Naive thymus-derived CD4-positive, alpha-beta T cell (primary cell): ENCODE measurements at regions of chr4 and their contacts with region 1.

Region 1: GRCh38 chr4:145097821-145098674 is at the starts of genes ABCE1 and ANAPC10:
- DNase-seq: peak; percentile 88 to 98 (median 94)
- ATAC-seq: peak; percentile 96
- H3K4me3 ChIP-seq: peak within 1 kb of the TSS; percentile 94
- H3K4me3 Mint-ChIP-seq: peak within 1 kb of the TSS in 9 of 10 donors; percentile 93 to 98 (median 96)
- H3K27ac ChIP-seq: peak within 1 kb of the TSS; percentile 80
- H3K27ac Mint-ChIP-seq: peak within 1 kb of the TSS; percentile 95 to 99 (median 98)
- H3K4me1 ChIP-seq: peaks cover 22 to 23% of the 10 kb centered on the region in 2 donors
- H3K4me1 Mint-ChIP-seq: peaks cover 28 to 52% (median 33%) of the 10 kb centered on the region in 7 donors
- H3K27me3 ChIP-seq: no peaks in the 10 kb centered on the region
- H3K27me3 Mint-ChIP-seq: no peaks in the 10 kb centered on the region
- total RNA-seq, gene ABCE1: 43.4 to 81.3 (median 62.2) TPM
- total RNA-seq, gene ANAPC10: 13.2 to 28.0 (median 19.6) TPM

Region 2: GRCh38 chr4:143558823-143559756 is 1539.0 kb before region 1 on chr4:
- CTCF ChIA-PET with region 1: no interaction called
- POLR2A ChIA-PET with region 1: no interaction called
- intact Hi-C with region 1: loop called in 1 of 2 experiments (anchors 10 kb)
- DNase-seq: peak; percentile 38 to 80 (median 58)
- ATAC-seq: peak; percentile 86
- H3K4me3 ChIP-seq: peak overlapping the region; percentile 79
- H3K4me3 Mint-ChIP-seq: peak overlapping the region; percentile 87 to 97 (median 90)
- H3K27ac ChIP-seq: peak overlapping the region; percentile 52
- H3K27ac Mint-ChIP-seq: peak overlapping the region; percentile 78 to 96 (median 91)
- H3K4me1 ChIP-seq: peaks cover 7 to 11% of the 10 kb centered on the region in 2 donors
- H3K4me1 Mint-ChIP-seq: peaks cover 8 to 40% (median 28%) of the 10 kb centered on the region in 7 donors
- H3K27me3 ChIP-seq: no peaks in the 10 kb centered on the region
- H3K27me3 Mint-ChIP-seq: no peaks in the 10 kb centered on the region

Region 3: DNA sequence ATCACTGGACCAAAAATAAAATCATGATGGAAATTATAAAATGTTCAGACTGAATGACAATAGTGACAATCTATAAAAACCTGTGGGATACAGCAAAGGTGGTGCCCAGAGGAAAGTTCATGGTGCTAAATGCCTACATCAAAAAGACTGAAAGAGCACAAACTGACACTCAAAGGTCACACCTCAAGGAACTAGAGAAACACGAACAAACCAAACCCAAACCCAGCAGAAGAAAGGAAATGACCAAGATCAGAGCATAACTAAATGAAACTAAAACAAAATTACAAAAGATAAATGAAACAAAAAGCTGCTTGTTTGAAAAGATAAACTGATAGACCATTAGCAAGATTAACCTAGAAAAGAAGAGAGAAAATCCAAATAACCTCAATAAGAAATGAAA is 78.7 kb before region 1 on chr4:
- CTCF ChIA-PET with region 1: no interaction called
- POLR2A ChIA-PET with region 1: no interaction called
- intact Hi-C with region 1: loop called in 1 of 2 experiments (anchors 2 kb)
- DNase-seq: peak in 2 of 9 donors; percentile 1 to 5
- ATAC-seq: no peak
- H3K4me3 ChIP-seq: no peak overlapping the region
- H3K4me3 Mint-ChIP-seq: peak overlapping the region in 9 of 10 donors; percentile 0 to 78 (median 52)
- H3K27ac ChIP-seq: peak overlapping the region; percentile 29
- H3K27ac Mint-ChIP-seq: peak overlapping the region in 8 of 9 donors; percentile 50 to 93 (median 74)
- H3K4me1 ChIP-seq: peaks cover 6 to 11% of the 10 kb centered on the region in 2 donors
- H3K4me1 Mint-ChIP-seq: peaks cover 16 to 52% (median 40%) of the 10 kb centered on the region in 7 donors
- H3K27me3 ChIP-seq: no peaks in the 10 kb centered on the region
- H3K27me3 Mint-ChIP-seq: no peaks in the 10 kb centered on the region

Region 4: DNA sequence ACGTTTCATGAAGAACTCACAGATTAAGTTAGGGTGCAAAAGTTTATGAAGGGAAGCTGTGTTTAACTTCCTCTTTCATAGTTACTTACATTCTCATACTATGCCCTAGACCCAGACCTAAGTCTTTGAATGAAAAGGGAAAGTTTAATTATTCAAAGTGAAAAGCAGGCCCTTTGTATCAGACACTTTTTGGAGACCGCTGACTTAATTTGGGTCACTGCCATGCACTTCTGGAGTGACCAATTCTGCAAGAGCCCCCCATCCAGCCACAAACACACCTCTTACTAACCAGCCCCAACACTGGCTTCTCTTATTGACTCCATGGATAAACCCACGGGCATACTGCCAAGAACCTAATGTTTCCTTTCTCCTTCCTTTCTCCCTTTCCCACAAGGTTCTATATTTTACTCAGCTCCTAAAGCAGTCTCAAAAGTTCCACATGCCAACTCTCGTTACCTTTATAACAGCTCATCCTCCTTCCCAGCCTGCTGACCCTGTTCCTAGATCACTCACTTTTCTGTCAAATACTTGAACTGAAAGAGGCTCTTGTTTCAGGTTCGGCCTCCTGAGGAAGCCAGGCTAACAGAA is 34.6 kb after region 1 on chr4:
- CTCF ChIA-PET with region 1: no interaction called
- POLR2A ChIA-PET with region 1: interaction called, 3 read pairs
- intact Hi-C with region 1: loop called in 1 of 2 experiments (anchors 2 kb)
- DNase-seq: no peak
- ATAC-seq: no peak
- H3K4me3 ChIP-seq: no peak overlapping the region
- H3K4me3 Mint-ChIP-seq: peak overlapping the region in 1 of 10 donors; percentile 52
- H3K27ac ChIP-seq: no peak overlapping the region
- H3K27ac Mint-ChIP-seq: peak overlapping the region; percentile 16 to 87 (median 61)
- H3K4me1 ChIP-seq: peaks cover 0 to 3% of the 10 kb centered on the region in 2 donors
- H3K4me1 Mint-ChIP-seq: peaks cover 9 to 75% (median 31%) of the 10 kb centered on the region in 7 donors
- H3K27me3 ChIP-seq: no peaks in the 10 kb centered on the region
- H3K27me3 Mint-ChIP-seq: no peaks in the 10 kb centered on the region

Region 5: GRCh38 chr4:146175541-146176453 is 1077.7 kb after region 1 on chr4 and contains the start of gene LSM6:
- CTCF ChIA-PET with region 1: no interaction called
- POLR2A ChIA-PET with region 1: no interaction called
- intact Hi-C with region 1: loop called in 1 of 2 experiments (anchors 5 kb)
- DNase-seq: peak; percentile 63 to 86 (median 84)
- ATAC-seq: peak; percentile 94
- H3K4me3 ChIP-seq: peak within 1 kb of the TSS; percentile 87
- H3K4me3 Mint-ChIP-seq: peak within 1 kb of the TSS; percentile 88 to 95 (median 92)
- H3K27ac ChIP-seq: peak within 1 kb of the TSS; percentile 94
- H3K27ac Mint-ChIP-seq: peak within 1 kb of the TSS; percentile 82 to 99 (median 97)
- H3K4me1 ChIP-seq: peaks cover 25 to 31% of the 10 kb centered on the region in 2 donors
- H3K4me1 Mint-ChIP-seq: peaks cover 29 to 66% (median 57%) of the 10 kb centered on the region in 7 donors
- H3K27me3 ChIP-seq: no peaks in the 10 kb centered on the region
- H3K27me3 Mint-ChIP-seq: no peaks in the 10 kb centered on the region
- total RNA-seq, gene LSM6: 24.7 to 49.7 (median 46.2) TPM